H1 (cell line): ENCODE measurements at regions of chr15 and their contacts with region 1.

Region 1: GRCh38 chr15:29925227-29926082 is 103.2 kb upstream of the TJP1 start:
- DNase-seq: peak; percentile 79 to 93
- H3K4me3 ChIP-seq: no peak overlapping the region
- H3K27ac ChIP-seq: 0 out of 2 replicates have a peak overlapping the region, but pooled peaks have one; percentile 16
- H3K4me1 ChIP-seq: peaks cover 7 to 15% (median 10%) of the 10 kb centered on the region in 4 experiments
- H3K27me3 ChIP-seq: no peaks in the 10 kb centered on the region
- CTCF ChIP-seq: peak; percentile 97 to 99 (median 99)
- EP300 ChIP-seq: no peak
- POLR2A ChIP-seq: peak in 1 of 2 experiments; percentile 79; a peak in 2 of 3 replicates
- RAD21 ChIP-seq: peak; percentile 94 to 97

Region 2: GRCh38 chr15:29747837-29748417 is 177.5 kb before region 1 on chr15:
- CTCF ChIA-PET with region 1: interaction called, 23 read pairs
- POLR2A ChIA-PET with region 1: no interaction called
- DNase-seq: no peak
- H3K4me3 ChIP-seq: no peak overlapping the region
- H3K27ac ChIP-seq: no peak overlapping the region
- H3K4me1 ChIP-seq: no peaks in the 10 kb centered on the region
- H3K27me3 ChIP-seq: no peaks in the 10 kb centered on the region
- CTCF ChIP-seq: no peak
- EP300 ChIP-seq: no peak
- POLR2A ChIP-seq: no peak
- RAD21 ChIP-seq: no peak

Region 3: GRCh38 chr15:29835301-29835700 is 90.2 kb before region 1 on chr15:
- CTCF ChIA-PET with region 1: interaction called, 20 read pairs
- POLR2A ChIA-PET with region 1: no interaction called
- DNase-seq: no peak
- H3K4me3 ChIP-seq: no peak overlapping the region
- H3K27ac ChIP-seq: no peak overlapping the region
- H3K4me1 ChIP-seq: no peaks in the 10 kb centered on the region
- H3K27me3 ChIP-seq: no peaks in the 10 kb centered on the region
- CTCF ChIP-seq: no peak
- EP300 ChIP-seq: no peak
- POLR2A ChIP-seq: no peak
- RAD21 ChIP-seq: no peak

Region 4: GRCh38 chr15:29870495-29871151 is 54.8 kb before region 1 on chr15:
- CTCF ChIA-PET with region 1: interaction called, 23 read pairs
- POLR2A ChIA-PET with region 1: interaction called, 3 read pairs
- DNase-seq: no peak
- H3K4me3 ChIP-seq: no peak overlapping the region
- H3K27ac ChIP-seq: no peak overlapping the region
- H3K4me1 ChIP-seq: 0 out of 7 replicates have a peak, but pooled peaks cover 0 to 6% (median 0%) of the 10 kb centered on the region in 4 experiments
- H3K27me3 ChIP-seq: no peaks in the 10 kb centered on the region
- CTCF ChIP-seq: no peak
- EP300 ChIP-seq: no peak
- POLR2A ChIP-seq: no peak
- RAD21 ChIP-seq: no peak

Region 5: DNA sequence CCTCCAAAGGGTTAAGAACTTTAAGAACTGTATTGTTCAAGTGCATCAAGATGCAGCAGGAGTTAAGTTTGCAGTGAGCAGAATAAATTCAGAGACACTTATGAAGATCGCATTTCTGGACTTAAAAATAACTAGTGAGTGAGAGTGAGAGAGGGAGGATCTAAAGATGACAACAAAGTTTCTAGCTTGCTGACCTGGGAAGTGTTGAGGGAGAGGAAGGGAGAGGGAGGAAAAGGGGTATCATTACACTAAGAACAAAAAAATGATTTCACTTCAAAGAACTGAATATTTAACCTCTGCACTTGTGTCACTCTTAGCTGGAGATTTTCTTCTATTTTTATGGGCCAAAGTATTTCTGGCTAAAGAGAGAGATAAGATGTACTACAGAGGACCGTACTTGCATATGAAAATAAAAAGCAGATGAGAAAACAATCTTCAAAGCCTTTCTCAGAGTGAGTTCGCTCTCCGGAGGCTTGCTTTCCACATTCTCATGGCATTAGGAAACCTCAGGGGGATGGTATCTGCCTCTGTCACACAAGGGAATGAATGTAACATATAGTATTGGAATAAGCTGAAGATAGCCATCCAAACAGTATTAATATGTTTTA is 11.8 kb before region 1 on chr15:
- CTCF ChIA-PET with region 1: interaction called, 19 read pairs
- POLR2A ChIA-PET with region 1: interaction called, 6 read pairs
- DNase-seq: no peak
- H3K4me3 ChIP-seq: no peak overlapping the region
- H3K27ac ChIP-seq: no peak overlapping the region
- H3K4me1 ChIP-seq: peaks cover 0 to 5% (median 0%) of the 10 kb centered on the region in 4 experiments; a peak in 2 of 7 replicates
- H3K27me3 ChIP-seq: no peaks in the 10 kb centered on the region
- CTCF ChIP-seq: no peak
- EP300 ChIP-seq: no peak
- POLR2A ChIP-seq: no peak
- RAD21 ChIP-seq: no peak

Region 6: DNA sequence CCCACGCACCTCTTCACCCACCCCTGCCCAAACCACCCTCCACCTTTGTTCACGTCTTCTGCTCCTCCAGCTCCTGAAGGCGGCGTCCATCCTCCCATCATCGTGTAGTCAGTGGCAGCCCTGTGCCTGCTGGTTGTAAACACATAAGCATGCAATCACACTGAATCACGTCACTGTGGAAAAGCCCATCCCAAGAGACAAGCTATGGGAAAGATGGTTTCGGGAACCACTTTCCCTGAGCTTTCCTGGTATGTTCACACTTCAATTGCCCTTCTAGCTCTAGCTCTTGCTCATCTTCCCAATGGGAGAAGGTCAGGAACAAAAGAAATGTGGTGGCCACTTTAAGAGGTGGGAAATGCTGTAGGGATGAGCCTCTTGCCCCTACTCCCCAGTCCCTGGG is 142.9 kb after region 1 on chr15:
- CTCF ChIA-PET with region 1: interaction called, 17 read pairs
- POLR2A ChIA-PET with region 1: no interaction called
- DNase-seq: no peak
- H3K4me3 ChIP-seq: no peak overlapping the region
- H3K27ac ChIP-seq: no peak overlapping the region
- H3K4me1 ChIP-seq: no peaks in the 10 kb centered on the region
- H3K27me3 ChIP-seq: no peaks in the 10 kb centered on the region
- CTCF ChIP-seq: no peak
- EP300 ChIP-seq: no peak
- POLR2A ChIP-seq: no peak
- RAD21 ChIP-seq: no peak